ENCODE measurements at regions of chr16 and their contacts with region 1.

Region 1: DNA sequence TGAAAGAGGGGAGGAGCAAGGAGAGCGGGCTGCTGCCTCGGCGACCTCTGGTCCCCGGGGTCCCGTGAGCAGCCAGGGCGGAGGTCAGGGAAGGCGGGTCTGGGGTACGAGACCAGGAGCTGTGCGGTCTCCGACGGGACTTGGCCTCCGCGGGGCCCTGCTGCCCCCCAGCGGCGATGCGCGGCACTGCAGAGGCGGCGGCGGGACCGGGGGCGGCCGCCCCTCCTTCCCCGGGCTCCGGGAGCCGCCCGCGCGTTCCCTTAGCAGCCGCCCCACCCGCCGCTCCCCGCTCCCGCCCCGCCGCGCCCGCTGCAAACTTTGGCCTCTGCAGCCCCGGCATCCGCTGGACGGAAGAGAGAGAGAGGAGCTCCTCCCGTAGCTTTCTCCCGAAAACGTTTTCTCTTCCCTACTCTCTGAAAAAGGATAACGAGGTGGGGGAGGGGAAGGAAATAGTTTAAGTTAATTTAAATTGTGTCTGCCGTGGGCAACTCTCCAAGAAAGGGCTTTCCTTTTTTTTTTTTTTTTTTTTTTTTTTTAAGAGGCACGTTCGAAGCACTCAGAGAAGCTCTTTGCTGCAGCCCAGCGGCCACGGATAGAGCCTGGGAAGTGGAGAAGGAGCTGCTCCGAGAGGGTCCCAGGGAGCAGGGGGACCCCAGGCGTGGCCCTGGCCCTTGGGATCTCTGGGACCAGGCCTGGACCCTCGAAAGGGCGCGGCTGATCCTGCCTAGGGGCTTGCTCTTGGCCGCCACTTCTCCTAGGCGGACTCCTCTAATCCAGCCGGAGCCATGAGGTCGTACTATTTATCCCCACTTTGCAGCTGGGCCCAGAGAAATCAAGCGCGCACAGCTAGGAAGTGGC is 43.2 kb downstream of the C16orf82 start:
- DNase-seq: peak; percentile 62
- H3K4me3 ChIP-seq: peak overlapping the region in 2 of 3 experiments; percentile 16 to 22
- H3K27ac ChIP-seq: no peak overlapping the region
- H3K4me1 ChIP-seq: no peaks in the 10 kb centered on the region
- H3K27me3 ChIP-seq: no peaks in the 10 kb centered on the region
- CTCF ChIP-seq: peak; percentile 72 to 88
- POLR2A ChIP-seq: no peak

Region 2: DNA sequence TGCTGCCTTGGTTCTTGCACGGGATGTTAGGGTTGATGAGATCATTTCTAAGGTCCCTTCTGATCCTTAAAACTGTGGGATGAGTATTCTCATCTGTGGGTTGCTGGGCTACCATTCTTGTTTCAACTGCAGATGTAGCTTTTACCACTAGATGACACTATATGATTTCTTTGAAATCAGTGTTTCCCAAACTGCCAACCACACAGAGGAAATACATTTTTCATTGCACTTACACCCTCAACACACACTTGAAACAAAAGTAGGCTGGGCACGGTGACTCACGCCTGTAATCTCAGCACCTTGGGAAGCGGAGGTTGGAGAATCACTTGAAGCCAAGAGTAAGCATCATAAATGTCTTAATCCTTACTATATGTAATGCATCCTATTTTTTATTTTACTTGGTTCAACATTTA is 1983.1 kb before region 1 on chr16:
- CTCF ChIA-PET with region 1: interaction called, 12 read pairs
- POLR2A ChIA-PET with region 1: no interaction called
- dilution Hi-C with region 1: no loop called
- intact Hi-C with region 1: no loop called
- DNase-seq: peak; percentile 58
- H3K4me3 ChIP-seq: no peak overlapping the region
- H3K27ac ChIP-seq: no peak overlapping the region
- H3K4me1 ChIP-seq: no peaks in the 10 kb centered on the region
- H3K27me3 ChIP-seq: no peaks in the 10 kb centered on the region
- CTCF ChIP-seq: peak; percentile 48 to 49
- POLR2A ChIP-seq: no peak

Region 3: DNA sequence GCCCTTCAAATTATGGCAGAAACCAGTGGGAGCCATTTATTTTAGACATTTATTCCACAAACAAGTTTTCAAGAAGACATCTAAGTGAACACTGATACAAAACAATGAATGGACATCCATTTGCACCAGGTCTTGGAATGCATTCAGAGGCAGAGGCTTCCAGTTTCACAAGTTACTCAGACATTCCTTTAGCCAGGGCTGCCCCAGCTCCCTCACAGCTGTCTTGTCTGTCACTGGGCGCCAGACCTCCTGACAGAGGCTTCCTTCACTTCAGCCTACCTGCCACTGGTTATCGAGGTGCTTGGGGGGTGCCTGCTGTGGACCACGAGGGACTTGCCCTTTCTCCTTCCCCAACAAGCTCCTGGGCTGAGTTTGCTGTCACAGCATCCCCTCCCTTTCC is 1873.9 kb before region 1 on chr16:
- CTCF ChIA-PET with region 1: interaction called, 68 read pairs
- POLR2A ChIA-PET with region 1: interaction called, 7 read pairs
- dilution Hi-C with region 1: no loop called
- intact Hi-C with region 1: loop called (anchors 1 kb)
- DNase-seq: no peak
- H3K4me3 ChIP-seq: no peak overlapping the region
- H3K27ac ChIP-seq: no peak overlapping the region
- H3K4me1 ChIP-seq: no peaks in the 10 kb centered on the region
- H3K27me3 ChIP-seq: no peaks in the 10 kb centered on the region
- CTCF ChIP-seq: no peak
- POLR2A ChIP-seq: no peak

Region 4: DNA sequence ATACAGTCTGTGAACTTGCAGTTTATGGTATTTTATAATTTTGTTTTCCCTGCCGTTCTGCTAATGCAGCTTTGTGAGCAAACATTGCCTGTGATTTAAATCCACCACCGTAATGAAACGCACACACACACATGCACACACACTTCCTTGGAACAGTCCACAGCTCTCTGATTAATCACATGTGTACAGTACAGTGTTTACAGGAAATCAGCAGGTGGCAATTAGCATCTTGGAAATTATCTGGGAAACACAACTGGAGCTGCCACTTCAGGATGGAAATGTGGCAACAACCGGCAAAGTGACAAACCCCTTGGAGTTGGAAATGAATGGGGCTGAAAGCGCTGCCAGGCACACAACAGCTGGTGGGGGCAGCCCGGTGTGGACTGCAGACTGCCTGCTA is 1839.3 kb before region 1 on chr16:
- CTCF ChIA-PET with region 1: interaction called, 65 read pairs
- POLR2A ChIA-PET with region 1: no interaction called
- dilution Hi-C with region 1: no loop called
- intact Hi-C with region 1: no loop called
- DNase-seq: no peak
- H3K4me3 ChIP-seq: no peak overlapping the region
- H3K27ac ChIP-seq: no peak overlapping the region
- H3K4me1 ChIP-seq: no peaks in the 10 kb centered on the region
- H3K27me3 ChIP-seq: no peaks in the 10 kb centered on the region
- CTCF ChIP-seq: no peak
- POLR2A ChIP-seq: no peak

Region 5: GRCh38 chr16:25279491-25279890 is 1830.4 kb before region 1 on chr16:
- CTCF ChIA-PET with region 1: interaction called, 65 read pairs
- POLR2A ChIA-PET with region 1: no interaction called
- dilution Hi-C with region 1: no loop called
- intact Hi-C with region 1: loop called (anchors 1 kb)
- DNase-seq: no peak
- H3K4me3 ChIP-seq: no peak overlapping the region
- H3K27ac ChIP-seq: no peak overlapping the region
- H3K4me1 ChIP-seq: no peaks in the 10 kb centered on the region
- H3K27me3 ChIP-seq: no peaks in the 10 kb centered on the region
- CTCF ChIP-seq: no peak
- POLR2A ChIP-seq: no peak

Region 6: GRCh38 chr16:27097800-27098230 is 12.1 kb before region 1 on chr16:
- CTCF ChIA-PET with region 1: interaction called, 21 read pairs
- POLR2A ChIA-PET with region 1: no interaction called
- dilution Hi-C with region 1: no loop called
- intact Hi-C with region 1: no loop called
- DNase-seq: no peak
- H3K4me3 ChIP-seq: no peak overlapping the region
- H3K27ac ChIP-seq: no peak overlapping the region
- H3K4me1 ChIP-seq: no peaks in the 10 kb centered on the region
- H3K27me3 ChIP-seq: no peaks in the 10 kb centered on the region
- CTCF ChIP-seq: no peak
- POLR2A ChIP-seq: no peak

Region 7: GRCh38 chr16:27123795-27124409 is 14.0 kb after region 1 on chr16:
- CTCF ChIA-PET with region 1: interaction called, 16 read pairs
- POLR2A ChIA-PET with region 1: no interaction called
- dilution Hi-C with region 1: no loop called
- intact Hi-C with region 1: no loop called
- DNase-seq: no peak
- H3K4me3 ChIP-seq: no peak overlapping the region
- H3K27ac ChIP-seq: no peak overlapping the region
- H3K4me1 ChIP-seq: no peaks in the 10 kb centered on the region
- H3K27me3 ChIP-seq: no peaks in the 10 kb centered on the region
- CTCF ChIP-seq: no peak
- POLR2A ChIP-seq: no peak

Region 8: GRCh38 chr16:27960619-27961295 is 850.9 kb after region 1 on chr16:
- CTCF ChIA-PET with region 1: no interaction called
- POLR2A ChIA-PET with region 1: no interaction called
- dilution Hi-C with region 1: no loop called
- intact Hi-C with region 1: no loop called
- DNase-seq: no peak
- H3K4me3 ChIP-seq: no peak overlapping the region
- H3K27ac ChIP-seq: no peak overlapping the region
- H3K4me1 ChIP-seq: no peaks in the 10 kb centered on the region
- H3K27me3 ChIP-seq: no peaks in the 10 kb centered on the region
- CTCF ChIP-seq: no peak
- POLR2A ChIP-seq: no peak